Ovary (tissue), 10 donors: ENCODE measurements at regions of chr4 and their contacts with region 1.

Region 1: DNA sequence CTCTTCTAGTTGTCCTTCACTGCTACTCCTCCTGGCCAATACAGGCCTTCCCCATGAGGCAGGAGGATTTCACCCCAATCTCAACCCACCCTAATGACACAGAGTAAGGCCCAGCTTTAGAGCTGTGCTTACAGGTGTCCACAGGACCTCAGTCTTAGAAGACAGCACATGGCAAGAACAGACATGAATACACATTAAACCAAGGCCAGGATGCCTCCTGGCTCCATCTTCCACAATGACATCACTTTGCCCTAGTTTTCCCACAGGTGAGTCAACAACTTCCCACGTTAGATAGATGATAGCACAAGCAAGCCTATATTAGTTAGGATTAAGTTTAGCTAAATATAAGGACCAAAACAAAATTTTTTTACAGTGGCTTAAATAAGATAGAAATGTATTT is 63.8 kb upstream of the NOCT start:
- DNase-seq: no peak
- H3K4me3 ChIP-seq: no peak overlapping the region
- H3K27ac ChIP-seq: no peak overlapping the region
- H3K4me1 ChIP-seq: no peaks in the 10 kb centered on the region
- H3K27me3 ChIP-seq: no peaks in the 10 kb centered on the region
- CTCF ChIP-seq: no peak
- EP300 ChIP-seq: no peak
- POLR2A ChIP-seq: no peak

Region 2: DNA sequence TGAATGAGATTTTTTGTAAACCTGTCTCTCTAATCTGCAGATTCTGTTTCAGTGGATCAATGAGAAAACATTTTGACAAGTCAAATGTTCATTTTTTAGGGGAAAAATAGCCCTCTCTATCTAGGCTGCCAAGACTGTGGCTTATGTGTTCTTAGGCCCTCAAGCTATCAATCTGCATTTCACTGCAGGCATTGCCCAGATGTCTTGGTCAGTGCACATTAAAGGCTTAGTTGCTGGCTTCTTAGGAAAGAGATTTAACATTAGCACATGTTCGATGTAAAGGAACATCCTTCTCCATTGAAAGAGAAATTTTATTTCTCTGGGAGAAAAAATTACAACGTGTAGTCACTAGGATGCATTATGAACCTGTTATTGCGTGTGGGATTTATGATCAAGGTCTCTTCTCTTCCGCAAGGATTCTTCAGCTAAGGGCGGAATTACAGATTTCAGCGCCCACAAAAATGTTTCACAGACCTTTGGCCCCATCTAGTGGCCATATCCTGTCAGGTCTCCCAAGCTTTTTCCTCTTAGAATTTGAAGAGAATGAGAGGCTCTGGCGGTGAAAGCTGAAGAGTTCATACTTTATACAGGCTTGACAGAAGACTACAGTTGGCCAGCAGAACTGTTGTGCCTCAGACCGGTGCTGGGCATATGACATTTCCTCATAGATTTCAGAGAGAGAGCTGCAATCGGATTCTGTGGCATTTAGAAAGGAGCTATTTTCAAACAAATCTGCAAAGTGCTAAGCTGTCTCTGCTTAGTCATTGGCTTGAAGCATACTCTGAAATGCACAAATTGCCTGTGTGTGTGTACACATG is 80.8 kb before region 1 on chr4:
- intact Hi-C with region 1: loop called in 1 of 4 experiments (anchors 2 kb)
- DNase-seq: peak; percentile 29 to 67 (median 52)
- H3K4me3 ChIP-seq: no peak overlapping the region
- H3K27ac ChIP-seq: no peak overlapping the region
- H3K4me1 ChIP-seq: no peaks in the 10 kb centered on the region
- H3K27me3 ChIP-seq: no peaks in the 10 kb centered on the region
- CTCF ChIP-seq: peak; percentile 50 to 76 (median 54)
- EP300 ChIP-seq: no peak
- POLR2A ChIP-seq: no peak

Region 3: GRCh38 chr4:138919094-138919936 is 32.4 kb before region 1 on chr4:
- intact Hi-C with region 1: no loop called
- DNase-seq: peak; percentile 20 to 54 (median 32)
- H3K4me3 ChIP-seq: no peak overlapping the region
- H3K27ac ChIP-seq: no peak overlapping the region
- H3K4me1 ChIP-seq: no peaks in the 10 kb centered on the region
- H3K27me3 ChIP-seq: no peaks in the 10 kb centered on the region
- CTCF ChIP-seq: no peak
- EP300 ChIP-seq: no peak
- POLR2A ChIP-seq: no peak